ENCODE measurements at regions of chr1 and their contacts with region 1.

Region 1: GRCh38 chr1:149886396-149887195 is 12.8 kb upstream of the BOLA1 start:
- DNase-seq: peak; percentile 94 to 97 (median 96)
- H3K4me3 ChIP-seq: peak overlapping the region; percentile 75 to 82
- H3K4me3 Mint-ChIP-seq: no peak overlapping the region
- H3K27ac ChIP-seq: peak overlapping the region; percentile 88
- H3K27ac Mint-ChIP-seq: no peak overlapping the region
- H3K4me1 ChIP-seq: peaks cover 27% of the 10 kb centered on the region
- H3K4me1 Mint-ChIP-seq: peaks cover 8 to 19% (median 10%) of the 10 kb centered on the region in 4 donors
- H3K27me3 ChIP-seq: no peaks in the 10 kb centered on the region
- H3K27me3 Mint-ChIP-seq: no peaks in the 10 kb centered on the region

Region 2: GRCh38 chr1:149899460-149900293 is 13.1 kb after region 1 on chr1 and contains the start of gene BOLA1:
- CTCF ChIA-PET with region 1: interaction called, 15 read pairs
- POLR2A ChIA-PET with region 1: interaction called, 158 read pairs
- intact Hi-C with region 1: loop called (anchors 1 kb)
- DNase-seq: peak; percentile 73 to 86 (median 78)
- H3K4me3 ChIP-seq: peak within 1 kb of the TSS; percentile 79 to 96
- H3K4me3 Mint-ChIP-seq: peak within 1 kb of the TSS; percentile 89 to 97 (median 93)
- H3K27ac ChIP-seq: peak within 1 kb of the TSS; percentile 77
- H3K27ac Mint-ChIP-seq: peak within 1 kb of the TSS; percentile 89 to 98 (median 94)
- H3K4me1 ChIP-seq: peaks cover 16% of the 10 kb centered on the region
- H3K4me1 Mint-ChIP-seq: peaks cover 10 to 25% (median 19%) of the 10 kb centered on the region in 4 donors
- H3K27me3 ChIP-seq: no peaks in the 10 kb centered on the region
- H3K27me3 Mint-ChIP-seq: no peaks in the 10 kb centered on the region
- total RNA-seq, gene BOLA1: 25.2 TPM

Region 3: GRCh38 chr1:149937060-149937705 is 50.6 kb after region 1 on chr1:
- CTCF ChIA-PET with region 1: no interaction called
- POLR2A ChIA-PET with region 1: interaction called, 176 read pairs
- intact Hi-C with region 1: loop called (anchors 1 kb)
- DNase-seq: no peak
- H3K4me3 ChIP-seq: no peak overlapping the region
- H3K4me3 Mint-ChIP-seq: no peak overlapping the region
- H3K27ac ChIP-seq: no peak overlapping the region
- H3K27ac Mint-ChIP-seq: peak overlapping the region in 4 of 7 donors; percentile 5 to 70 (median 52)
- H3K4me1 ChIP-seq: peaks cover 18% of the 10 kb centered on the region
- H3K4me1 Mint-ChIP-seq: peaks cover 12 to 25% (median 18%) of the 10 kb centered on the region in 4 donors
- H3K27me3 ChIP-seq: no peaks in the 10 kb centered on the region
- H3K27me3 Mint-ChIP-seq: peaks cover 0 to 2% of the 10 kb centered on the region in 2 donors

Region 4: GRCh38 chr1:150051089-150051373 is 164.4 kb after region 1 on chr1:
- CTCF ChIA-PET with region 1: interaction called, 13 read pairs
- POLR2A ChIA-PET with region 1: interaction called, 31 read pairs
- intact Hi-C with region 1: no loop called
- DNase-seq: no peak
- H3K4me3 ChIP-seq: no peak overlapping the region
- H3K4me3 Mint-ChIP-seq: no peak overlapping the region
- H3K27ac ChIP-seq: no peak overlapping the region
- H3K27ac Mint-ChIP-seq: no peak overlapping the region
- H3K4me1 ChIP-seq: no peaks in the 10 kb centered on the region
- H3K4me1 Mint-ChIP-seq: peaks cover 0 to 3% (median 1%) of the 10 kb centered on the region in 4 donors
- H3K27me3 ChIP-seq: no peaks in the 10 kb centered on the region
- H3K27me3 Mint-ChIP-seq: peaks cover 0 to 1% of the 10 kb centered on the region in 2 donors

Region 5: GRCh38 chr1:150149271-150150132 is 262.9 kb after region 1 on chr1 and contains the start of gene PLEKHO1:
- CTCF ChIA-PET with region 1: no interaction called
- POLR2A ChIA-PET with region 1: interaction called, 59 read pairs
- intact Hi-C with region 1: no loop called
- DNase-seq: peak; percentile 72 to 92 (median 79)
- H3K4me3 ChIP-seq: peak within 1 kb of the TSS; percentile 77 to 87
- H3K4me3 Mint-ChIP-seq: peak within 1 kb of the TSS; percentile 94 to 99 (median 98)
- H3K27ac ChIP-seq: peak within 1 kb of the TSS; percentile 81
- H3K27ac Mint-ChIP-seq: peak within 1 kb of the TSS; percentile 95 to 99 (median 98)
- H3K4me1 ChIP-seq: peaks cover 52% of the 10 kb centered on the region
- H3K4me1 Mint-ChIP-seq: peaks cover 53 to 83% (median 68%) of the 10 kb centered on the region in 4 donors
- H3K27me3 ChIP-seq: no peaks in the 10 kb centered on the region
- H3K27me3 Mint-ChIP-seq: no peaks in the 10 kb centered on the region
- total RNA-seq, gene PLEKHO1: 154 TPM

Region 6: GRCh38 chr1:150235852-150236613 is 349.4 kb after region 1 on chr1 and contains the start of gene ANP32E:
- CTCF ChIA-PET with region 1: no interaction called
- POLR2A ChIA-PET with region 1: interaction called, 55 read pairs
- intact Hi-C with region 1: loop called (anchors 1 kb)
- DNase-seq: peak; percentile 96 to 99 (median 98)
- H3K4me3 ChIP-seq: peak within 1 kb of the TSS; percentile 76 to 100
- H3K4me3 Mint-ChIP-seq: peak within 1 kb of the TSS in 6 of 8 donors; percentile 26 to 96 (median 94)
- H3K27ac ChIP-seq: peak within 1 kb of the TSS; percentile 99
- H3K27ac Mint-ChIP-seq: peak within 1 kb of the TSS in 6 of 7 donors; percentile 96 to 100 (median 99)
- H3K4me1 ChIP-seq: peaks cover 22% of the 10 kb centered on the region
- H3K4me1 Mint-ChIP-seq: peaks cover 12 to 19% (median 16%) of the 10 kb centered on the region in 4 donors
- H3K27me3 ChIP-seq: no peaks in the 10 kb centered on the region
- H3K27me3 Mint-ChIP-seq: no peaks in the 10 kb centered on the region
- total RNA-seq, gene ANP32E: 53.4 to 57.9 TPM

Region 7: DNA sequence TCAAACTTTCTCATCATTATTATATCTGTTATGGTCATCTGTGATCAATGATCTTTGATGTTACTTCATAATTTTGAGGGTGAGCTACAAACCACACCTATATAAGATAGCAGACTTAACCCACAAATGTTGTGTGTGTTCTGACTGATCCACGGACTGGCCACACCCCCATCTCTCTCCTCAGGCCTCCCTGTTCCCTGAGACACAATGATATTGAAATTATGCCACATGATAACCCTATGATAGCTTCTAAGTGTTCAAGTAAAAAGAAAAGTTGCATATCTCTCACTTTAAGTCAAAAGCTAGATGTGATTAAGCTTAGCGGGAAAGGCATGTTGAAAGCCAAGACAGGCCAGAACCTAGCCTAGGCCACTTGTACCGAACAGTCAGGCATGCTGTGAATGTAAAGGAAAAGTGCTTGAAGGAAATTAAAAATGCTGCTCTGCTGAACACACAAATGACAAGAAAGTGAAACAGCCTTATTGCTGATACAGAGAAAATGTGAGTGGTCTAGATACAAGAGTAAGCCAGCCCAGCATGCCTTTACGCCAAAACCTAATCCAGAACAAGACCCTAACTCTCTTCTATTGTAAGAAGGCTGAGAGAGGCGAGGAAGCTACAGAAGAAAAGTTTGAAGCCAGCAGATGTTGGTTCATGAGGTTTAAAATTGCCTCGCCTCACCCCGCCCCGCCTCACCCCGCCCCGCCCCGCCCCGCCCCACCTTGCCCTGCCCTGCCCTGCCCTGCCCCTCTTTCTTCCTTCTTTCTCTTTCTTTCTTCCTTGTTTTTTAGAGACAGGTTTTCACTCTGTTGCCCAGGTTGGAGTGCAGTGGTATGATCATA is 862.5 kb after region 1 on chr1:
- CTCF ChIA-PET with region 1: no interaction called
- POLR2A ChIA-PET with region 1: no interaction called
- intact Hi-C with region 1: no loop called
- DNase-seq: no peak
- H3K4me3 ChIP-seq: no peak overlapping the region
- H3K4me3 Mint-ChIP-seq: no peak overlapping the region
- H3K27ac ChIP-seq: no peak overlapping the region
- H3K27ac Mint-ChIP-seq: peak overlapping the region in 4 of 7 donors; percentile 7 to 85 (median 9)
- H3K4me1 ChIP-seq: no peaks in the 10 kb centered on the region
- H3K4me1 Mint-ChIP-seq: peaks cover 0 to 1% (median under 1%) of the 10 kb centered on the region in 4 donors
- H3K27me3 ChIP-seq: no peaks in the 10 kb centered on the region
- H3K27me3 Mint-ChIP-seq: no peaks in the 10 kb centered on the region

Measured in CD4-positive, alpha-beta memory T cell (primary cell).